Activated CD4-positive, alpha-beta T cell treated with anti-CD3 and anti-CD28 coated beads for 36 hours (primary cell): ENCODE measurements at regions of chr10 and their contacts with region 1.

Region 1: DNA sequence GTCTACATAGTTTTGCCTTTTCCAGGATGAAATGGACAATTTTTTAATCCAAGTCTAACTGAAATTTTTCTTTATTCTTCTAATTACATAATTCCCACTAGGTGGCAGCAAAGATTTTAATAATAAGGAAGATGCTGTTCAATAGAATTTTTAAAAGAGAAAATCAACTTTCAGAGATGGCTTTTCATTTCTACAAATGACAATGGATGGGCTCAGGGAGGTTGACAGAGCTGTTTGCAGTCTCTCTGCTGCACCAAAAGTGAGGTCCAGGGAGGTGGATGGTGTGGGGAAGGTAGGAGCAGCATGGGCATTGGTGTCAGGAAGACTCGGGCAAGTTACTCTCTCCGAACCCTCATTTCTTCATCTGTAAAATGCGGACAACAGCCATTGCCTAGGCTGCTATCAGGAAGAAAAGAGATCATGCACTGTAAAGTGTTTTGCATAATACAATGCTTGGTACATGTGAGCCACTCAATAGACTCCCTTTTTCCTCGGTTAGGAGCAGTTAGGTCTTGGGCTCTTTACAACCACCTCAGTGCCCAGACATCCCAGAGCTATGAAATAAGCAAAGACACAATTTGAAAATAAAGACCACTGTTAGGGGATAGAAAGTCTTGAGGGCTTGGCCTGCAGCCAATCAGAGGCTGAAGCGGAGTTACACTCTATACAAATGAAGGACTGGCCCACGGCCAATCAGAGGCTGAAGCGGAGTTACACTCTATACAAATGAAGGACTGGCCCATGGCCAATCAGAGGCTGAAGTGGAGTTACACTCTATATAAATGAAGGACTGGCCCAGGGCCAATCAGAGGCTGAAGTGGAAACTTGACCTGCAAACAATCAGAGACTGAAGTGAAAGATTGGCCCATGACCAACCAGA is 107.1 kb downstream of the ABLIM1 start:
- DNase-seq: no peak
- ATAC-seq: no peak
- H3K4me3 Mint-ChIP-seq: no peak overlapping the region
- H3K27ac Mint-ChIP-seq: no peak overlapping the region
- H3K4me1 Mint-ChIP-seq: peaks cover 28% of the 10 kb centered on the region
- H3K27me3 Mint-ChIP-seq: no peaks in the 10 kb centered on the region

Region 2: GRCh38 chr10:114694752-114695151 is 143.8 kb after region 1 on chr10:
- CTCF ChIA-PET with region 1: interaction called, 60 read pairs
- POLR2A ChIA-PET with region 1: no interaction called
- intact Hi-C with region 1: loop called (anchors 1 kb)
- DNase-seq: peak; percentile 69
- ATAC-seq: no peak
- H3K4me3 Mint-ChIP-seq: no peak overlapping the region
- H3K27ac Mint-ChIP-seq: no peak overlapping the region
- H3K4me1 Mint-ChIP-seq: peaks cover 10% of the 10 kb centered on the region
- H3K27me3 Mint-ChIP-seq: peaks cover 4% of the 10 kb centered on the region